ENCODE measurements at regions of chr10 and their contacts with region 1.

Region 1: GRCh38 chr10:17578603-17579002 is 38.6 kb downstream of the HACD1 start:
- DNase-seq: peak; percentile 97
- H3K4me3 ChIP-seq: no peak overlapping the region
- H3K27ac ChIP-seq: no peak overlapping the region
- H3K4me1 ChIP-seq: no peaks in the 10 kb centered on the region
- H3K27me3 ChIP-seq: no peaks in the 10 kb centered on the region
- CTCF ChIP-seq: no peak
- POLR2A ChIP-seq: peak; percentile 66

Region 2: DNA sequence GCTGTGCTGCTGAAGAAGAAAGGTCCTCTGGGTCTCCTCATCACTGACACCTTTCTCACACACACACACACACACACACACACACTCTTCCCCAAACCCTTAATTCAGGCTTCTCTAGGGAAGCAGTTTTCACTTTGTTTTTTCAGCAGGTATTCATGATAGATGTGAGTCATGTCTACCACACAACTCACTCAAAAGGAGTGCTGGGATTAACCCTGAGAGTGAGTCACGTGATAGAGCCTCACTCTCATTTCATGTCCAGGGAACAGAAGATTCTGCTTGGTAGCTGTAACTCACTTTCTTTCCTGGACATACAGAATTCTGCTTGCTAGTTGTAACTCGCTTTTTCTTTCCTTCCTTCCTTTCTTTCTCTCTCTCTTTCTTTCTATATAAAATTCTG is 305.2 kb before region 1 on chr10:
- CTCF ChIA-PET with region 1: no interaction called
- POLR2A ChIA-PET with region 1: no interaction called
- dilution Hi-C with region 1: no loop called
- intact Hi-C with region 1: no loop called
- DNase-seq: no peak
- H3K4me3 ChIP-seq: no peak overlapping the region
- H3K27ac ChIP-seq: no peak overlapping the region
- H3K4me1 ChIP-seq: no peaks in the 10 kb centered on the region
- H3K27me3 ChIP-seq: peaks cover 0 to 4% of the 10 kb centered on the region in 2 experiments
- CTCF ChIP-seq: no peak
- POLR2A ChIP-seq: no peak

Region 3: GRCh38 chr10:17348501-17349349 is 229.9 kb before region 1 on chr10:
- CTCF ChIA-PET with region 1: no interaction called
- POLR2A ChIA-PET with region 1: no interaction called
- dilution Hi-C with region 1: no loop called
- intact Hi-C with region 1: no loop called
- DNase-seq: peak; percentile 56
- H3K4me3 ChIP-seq: no peak overlapping the region
- H3K27ac ChIP-seq: no peak overlapping the region
- H3K4me1 ChIP-seq: no peaks in the 10 kb centered on the region
- H3K27me3 ChIP-seq: no peaks in the 10 kb centered on the region
- CTCF ChIP-seq: no peak
- POLR2A ChIP-seq: no peak

Region 4: GRCh38 chr10:17375936-17376584 is 202.5 kb before region 1 on chr10:
- CTCF ChIA-PET with region 1: no interaction called
- POLR2A ChIA-PET with region 1: no interaction called
- dilution Hi-C with region 1: no loop called
- intact Hi-C with region 1: no loop called
- DNase-seq: peak; percentile 2
- H3K4me3 ChIP-seq: no peak overlapping the region
- H3K27ac ChIP-seq: no peak overlapping the region
- H3K4me1 ChIP-seq: no peaks in the 10 kb centered on the region
- H3K27me3 ChIP-seq: no peaks in the 10 kb centered on the region
- CTCF ChIP-seq: peak; percentile 41 to 71
- POLR2A ChIP-seq: no peak

Region 5: GRCh38 chr10:17504547-17505245 is 73.9 kb before region 1 on chr10:
- CTCF ChIA-PET with region 1: no interaction called
- POLR2A ChIA-PET with region 1: no interaction called
- dilution Hi-C with region 1: no loop called
- intact Hi-C with region 1: no loop called
- DNase-seq: no peak
- H3K4me3 ChIP-seq: no peak overlapping the region
- H3K27ac ChIP-seq: no peak overlapping the region
- H3K4me1 ChIP-seq: peaks cover 11% of the 10 kb centered on the region
- H3K27me3 ChIP-seq: no peaks in the 10 kb centered on the region
- CTCF ChIP-seq: no peak
- POLR2A ChIP-seq: no peak

Region 6: GRCh38 chr10:17562614-17563013 is 16.0 kb before region 1 on chr10:
- CTCF ChIA-PET with region 1: no interaction called
- POLR2A ChIA-PET with region 1: no interaction called
- dilution Hi-C with region 1: no loop called
- intact Hi-C with region 1: loop called (anchors 1 kb)
- DNase-seq: peak; percentile 26
- H3K4me3 ChIP-seq: no peak overlapping the region
- H3K27ac ChIP-seq: no peak overlapping the region
- H3K4me1 ChIP-seq: no peaks in the 10 kb centered on the region
- H3K27me3 ChIP-seq: no peaks in the 10 kb centered on the region
- CTCF ChIP-seq: no peak
- POLR2A ChIP-seq: no peak